ENCODE measurements at regions of chr9 and their contacts with region 1.

Region 1: DNA sequence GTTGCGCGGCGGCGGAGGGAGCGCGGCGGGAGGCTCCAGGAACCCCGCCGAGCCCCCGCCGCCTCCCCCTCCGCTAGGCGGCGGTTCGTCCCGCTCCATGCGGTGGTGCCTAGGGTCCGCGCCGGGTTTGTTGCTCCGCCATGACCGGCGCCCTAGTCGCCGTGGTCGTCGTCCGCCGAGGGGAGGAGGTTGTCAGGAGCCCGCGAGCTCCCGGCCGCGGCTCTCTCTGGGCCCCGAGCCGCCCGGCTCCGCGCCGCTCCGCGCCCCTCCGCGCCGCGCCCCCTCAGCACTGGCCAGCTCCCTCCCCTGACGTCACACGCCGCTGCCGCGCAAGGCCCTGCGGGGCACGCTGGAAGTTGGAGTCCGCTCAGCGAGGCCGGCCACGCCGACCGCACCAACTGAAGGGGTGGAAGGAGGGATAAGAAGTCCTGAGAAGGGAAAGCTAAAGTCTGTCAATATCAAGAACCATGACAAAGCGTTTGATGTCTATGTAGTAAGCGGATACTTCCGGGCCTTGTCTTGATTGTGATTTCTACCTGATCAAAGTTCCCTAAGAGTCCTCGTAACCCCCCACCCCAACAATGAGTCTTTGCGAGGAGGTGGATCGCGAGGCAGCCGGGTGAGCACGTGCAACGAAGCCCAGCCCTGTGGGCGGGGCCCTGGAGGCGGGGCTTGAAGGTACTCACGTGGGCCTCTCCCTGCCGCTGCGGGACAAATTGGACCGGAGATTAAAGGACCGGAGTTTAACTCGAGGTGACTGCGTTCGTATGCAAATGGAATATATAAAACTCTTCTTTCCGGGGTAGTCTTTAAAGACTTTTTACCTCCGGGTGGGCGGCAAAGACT is at the start of gene NR6A1:
- DNase-seq: peak; percentile 97 to 99
- ATAC-seq: peak; percentile 81
- total RNA-seq, gene NR6A1: 4.6 to 7.1 TPM

Region 2: GRCh38 chr9:124852829-124853531 is 81.7 kb after region 1 on chr9 and contains the start of gene WDR38:
- intact Hi-C with region 1: loop called (anchors 2 to 5 kb)
- DNase-seq: peak; percentile 66 to 82
- ATAC-seq: peak; percentile 87
- total RNA-seq, gene WDR38: not detected

Measured in left colon (tissue), 2 donors.